Left ventricle myocardium superior (tissue), 1 donor: ENCODE measurements at regions of chr4 and their contacts with region 1.

Region 1: GRCh38 chr4:77358315-77358928 is 201.4 kb downstream of the CCNG2 start:
- DNase-seq: no peak
- ATAC-seq: peak; percentile 63

Region 2: GRCh38 chr4:77240469-77241066 is 117.9 kb before region 1 on chr4:
- intact Hi-C with region 1: loop called (anchors 5 kb)
- DNase-seq: peak; percentile 65
- ATAC-seq: peak; percentile 79